ENCODE measurements at regions of chr2 and their contacts with region 1.

Region 1: GRCh38 chr2:230824406-230824978 is 40.2 kb upstream of the ITM2C start:
- DNase-seq: peak; percentile 83
- CTCF ChIP-seq: peak; percentile 68

Region 2: GRCh38 chr2:230400454-230400853 is 424.0 kb before region 1 on chr2:
- CTCF ChIA-PET with region 1: no interaction called
- POLR2A ChIA-PET with region 1: no interaction called
- DNase-seq: no peak
- CTCF ChIP-seq: no peak

Region 3: DNA sequence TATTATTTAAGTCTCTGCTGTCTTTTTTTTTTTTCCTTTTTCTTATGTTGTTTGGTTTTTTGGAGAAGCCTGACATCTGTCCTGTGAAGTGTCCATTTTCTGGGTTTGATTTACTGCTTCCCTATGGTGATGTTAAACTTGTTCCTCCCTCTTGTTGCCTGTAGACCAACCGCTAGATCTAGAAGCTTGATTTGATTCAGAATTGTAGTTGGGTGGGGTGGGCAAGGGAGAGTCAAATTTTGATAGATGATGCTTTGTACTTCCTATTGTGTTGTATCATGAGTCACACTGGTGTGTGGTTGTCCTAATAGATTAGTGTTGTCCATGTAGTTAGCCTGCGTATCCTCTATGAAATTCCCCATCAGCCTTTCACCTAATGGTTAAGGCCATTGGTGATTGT is 76.4 kb before region 1 on chr2:
- CTCF ChIA-PET with region 1: interaction called, 10 read pairs
- POLR2A ChIA-PET with region 1: no interaction called
- DNase-seq: no peak
- CTCF ChIP-seq: no peak

Region 4: GRCh38 chr2:230798769-230799399 is 25.6 kb before region 1 on chr2:
- CTCF ChIA-PET with region 1: interaction called, 20 read pairs
- POLR2A ChIA-PET with region 1: no interaction called
- DNase-seq: peak; percentile 47
- CTCF ChIP-seq: peak; percentile 45

Region 5: DNA sequence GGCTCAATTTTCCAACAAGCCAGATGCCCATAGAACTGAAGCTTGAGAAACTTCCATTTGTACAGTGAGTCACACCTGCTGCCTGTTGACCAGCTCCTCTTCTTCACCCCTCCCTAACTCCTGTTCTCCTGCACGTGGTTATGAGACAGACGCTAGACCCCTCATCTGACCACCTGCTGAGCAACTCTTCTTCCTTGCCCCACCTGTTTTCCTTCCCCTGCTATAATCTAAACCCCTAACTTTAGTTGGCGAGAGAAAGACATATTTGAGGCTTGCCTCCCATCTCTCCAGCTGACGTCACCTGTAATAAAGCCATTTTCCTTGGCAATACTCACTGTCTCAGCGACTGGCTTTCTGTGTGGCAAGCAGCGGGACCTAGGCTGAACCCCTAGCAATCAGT is 18.0 kb after region 1 on chr2:
- CTCF ChIA-PET with region 1: interaction called, 50 read pairs
- POLR2A ChIA-PET with region 1: interaction called, 3 read pairs
- DNase-seq: no peak
- CTCF ChIP-seq: no peak

Region 6: GRCh38 chr2:230847883-230848388 is 23.4 kb after region 1 on chr2:
- CTCF ChIA-PET with region 1: interaction called, 50 read pairs
- POLR2A ChIA-PET with region 1: no interaction called
- DNase-seq: peak; percentile 92
- CTCF ChIP-seq: peak; percentile 91

Region 7: DNA sequence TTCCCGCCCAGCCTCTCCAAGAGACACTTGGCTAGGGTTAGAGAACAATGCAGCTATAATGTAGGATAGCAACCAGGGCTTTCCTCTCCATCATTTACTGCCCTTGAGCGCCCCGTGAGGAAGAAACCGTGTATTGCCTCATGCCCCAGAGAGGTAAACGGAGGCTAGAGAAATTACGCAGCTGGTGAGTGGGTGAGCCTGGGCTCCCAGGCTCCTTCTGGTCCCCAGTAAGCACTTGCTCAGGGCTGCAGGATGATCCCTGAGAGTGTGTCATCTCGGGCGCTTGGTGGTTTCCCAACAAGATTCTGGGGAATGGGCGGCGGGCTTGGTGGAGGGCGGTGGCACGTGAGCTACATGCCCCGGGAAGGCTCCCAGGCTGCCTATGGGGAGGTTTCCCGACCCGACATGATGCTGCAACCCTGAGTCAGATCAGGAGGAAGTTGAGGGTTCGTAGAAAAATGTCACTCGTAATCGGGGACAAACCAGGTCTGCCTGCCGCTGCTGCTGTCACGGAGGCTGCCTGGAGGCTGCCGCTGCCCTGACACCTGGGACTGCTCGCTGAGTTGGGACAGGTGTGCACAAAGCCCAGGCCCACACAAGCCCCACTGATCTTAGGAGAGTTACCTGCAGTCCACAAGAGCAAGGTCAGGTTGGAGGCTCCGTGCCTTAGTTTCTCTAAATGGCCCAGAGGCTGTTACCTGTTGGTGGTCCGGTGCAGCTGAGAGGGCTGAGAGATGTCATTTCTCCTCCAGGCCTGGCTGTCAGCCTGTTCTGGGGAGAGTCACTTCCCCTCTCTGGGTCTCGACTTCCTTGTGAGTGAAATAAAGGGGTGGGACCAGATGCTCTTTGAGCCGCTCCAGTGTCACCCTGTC is 100.2 kb after region 1 on chr2 and contains the start of gene GPR55:
- CTCF ChIA-PET with region 1: interaction called, 19 read pairs
- POLR2A ChIA-PET with region 1: no interaction called
- DNase-seq: peak; percentile 79
- CTCF ChIP-seq: peak; percentile 70

Region 8: DNA sequence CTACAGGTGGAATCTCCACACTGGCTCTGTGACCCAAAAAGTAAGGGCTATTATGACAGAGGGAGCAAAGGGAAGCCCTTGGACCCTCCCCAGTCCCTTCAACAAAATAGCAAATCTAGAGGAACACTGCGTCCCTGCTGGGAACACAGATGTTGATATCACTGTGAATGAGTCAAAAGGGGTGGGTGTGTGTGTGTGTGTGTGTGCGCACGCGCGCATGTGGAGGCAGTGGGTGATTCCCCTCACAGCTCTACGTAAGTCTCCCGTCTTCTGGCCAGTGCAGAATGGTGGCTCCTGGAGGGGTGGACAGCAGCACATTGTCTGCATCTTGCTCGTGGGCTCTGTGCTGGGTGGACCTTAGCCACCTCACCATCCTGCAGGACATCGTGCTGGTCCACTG is 205.1 kb after region 1 on chr2:
- CTCF ChIA-PET with region 1: interaction called, 10 read pairs
- POLR2A ChIA-PET with region 1: no interaction called
- DNase-seq: no peak
- CTCF ChIP-seq: no peak